Sigmoid colon (tissue), 7 donors: ENCODE measurements at regions of chr1 and their contacts with region 1.

Region 1: GRCh38 chr1:176843352-176844297 is 320.9 kb downstream of the ASTN1 start:
- DNase-seq: no peak
- H3K4me3 ChIP-seq: no peak overlapping the region
- H3K27ac ChIP-seq: peak overlapping the region in 1 of 4 donors; percentile 74
- H3K4me1 ChIP-seq: peaks cover 0 to 49% (median 36%) of the 10 kb centered on the region in 4 donors
- H3K27me3 ChIP-seq: no peaks in the 10 kb centered on the region
- CTCF ChIP-seq: peak; percentile 28 to 63 (median 50)
- EP300 ChIP-seq: no peak
- POLR2A ChIP-seq: no peak

Region 2: GRCh38 chr1:176374967-176375569 is 468.6 kb before region 1 on chr1:
- intact Hi-C with region 1: loop called (anchors 5 kb)
- DNase-seq: peak; percentile 80
- H3K4me3 ChIP-seq: no peak overlapping the region
- H3K27ac ChIP-seq: no peak overlapping the region
- H3K4me1 ChIP-seq: no peaks in the 10 kb centered on the region
- H3K27me3 ChIP-seq: no peaks in the 10 kb centered on the region
- CTCF ChIP-seq: peak; percentile 34 to 83 (median 73)
- EP300 ChIP-seq: no peak
- POLR2A ChIP-seq: no peak

Region 3: GRCh38 chr1:176691251-176692228 is 152.1 kb before region 1 on chr1:
- intact Hi-C with region 1: loop called (anchors 5 kb)
- DNase-seq: peak; percentile 69
- H3K4me3 ChIP-seq: no peak overlapping the region
- H3K27ac ChIP-seq: peak overlapping the region in 3 of 4 donors; percentile 73 to 87 (median 77)
- H3K4me1 ChIP-seq: peaks cover 0 to 58% (median 54%) of the 10 kb centered on the region in 4 donors
- H3K27me3 ChIP-seq: no peaks in the 10 kb centered on the region
- CTCF ChIP-seq: peak; percentile 31 to 68 (median 54)
- EP300 ChIP-seq: no peak
- POLR2A ChIP-seq: no peak

Region 4: DNA sequence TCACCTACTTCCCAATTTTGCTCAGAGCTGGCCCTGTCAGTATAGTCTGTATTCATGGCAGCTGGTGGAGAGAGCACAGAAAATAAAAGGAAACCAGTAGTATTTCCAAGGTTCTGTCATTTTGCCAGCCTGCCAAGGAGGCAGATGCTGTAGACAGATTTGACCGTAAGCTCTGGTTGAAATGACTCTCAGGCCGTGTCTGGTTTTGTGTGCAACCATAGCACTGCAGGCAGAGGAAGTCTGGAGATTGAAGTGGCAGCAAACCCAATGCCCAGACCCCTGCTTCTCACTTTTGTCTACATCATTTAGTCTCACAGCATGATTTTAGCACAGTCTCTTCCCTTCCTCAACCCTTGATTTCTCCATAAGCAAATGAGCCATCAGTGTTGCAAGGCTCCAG is 88.9 kb before region 1 on chr1:
- intact Hi-C with region 1: no loop called
- DNase-seq: no peak
- H3K4me3 ChIP-seq: no peak overlapping the region
- H3K27ac ChIP-seq: no peak overlapping the region
- H3K4me1 ChIP-seq: no peaks in the 10 kb centered on the region
- H3K27me3 ChIP-seq: no peaks in the 10 kb centered on the region
- CTCF ChIP-seq: no peak
- EP300 ChIP-seq: no peak
- POLR2A ChIP-seq: no peak

Region 5: GRCh38 chr1:176765608-176766007 is 78.0 kb before region 1 on chr1:
- intact Hi-C with region 1: no loop called
- DNase-seq: no peak
- H3K4me3 ChIP-seq: no peak overlapping the region
- H3K27ac ChIP-seq: no peak overlapping the region
- H3K4me1 ChIP-seq: peaks cover 0 to 5% (median 2%) of the 10 kb centered on the region in 4 donors
- H3K27me3 ChIP-seq: no peaks in the 10 kb centered on the region
- CTCF ChIP-seq: no peak
- EP300 ChIP-seq: no peak
- POLR2A ChIP-seq: no peak

Region 6: DNA sequence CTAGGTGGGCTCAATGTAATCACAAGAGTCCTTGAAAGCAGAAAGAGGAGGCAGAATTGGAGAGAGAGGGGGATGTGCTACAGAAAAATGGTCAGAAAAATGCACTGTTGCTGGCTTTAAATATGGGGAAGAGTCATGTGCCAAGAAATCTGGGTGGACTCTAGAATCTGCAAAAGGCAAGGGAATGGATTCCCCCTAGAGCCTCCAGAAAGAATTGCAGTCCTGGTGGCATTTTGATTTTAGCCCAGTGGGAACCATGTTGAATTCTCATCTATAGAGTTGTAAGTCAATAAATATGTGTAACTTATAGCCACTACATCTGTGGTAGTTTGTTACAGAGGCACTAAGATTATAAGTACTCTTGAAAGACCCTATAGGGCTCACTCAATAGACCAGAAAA is 110.6 kb after region 1 on chr1:
- intact Hi-C with region 1: no loop called
- DNase-seq: no peak
- H3K4me3 ChIP-seq: no peak overlapping the region
- H3K27ac ChIP-seq: no peak overlapping the region
- H3K4me1 ChIP-seq: no peaks in the 10 kb centered on the region
- H3K27me3 ChIP-seq: no peaks in the 10 kb centered on the region
- CTCF ChIP-seq: no peak
- EP300 ChIP-seq: no peak
- POLR2A ChIP-seq: no peak

Region 7: DNA sequence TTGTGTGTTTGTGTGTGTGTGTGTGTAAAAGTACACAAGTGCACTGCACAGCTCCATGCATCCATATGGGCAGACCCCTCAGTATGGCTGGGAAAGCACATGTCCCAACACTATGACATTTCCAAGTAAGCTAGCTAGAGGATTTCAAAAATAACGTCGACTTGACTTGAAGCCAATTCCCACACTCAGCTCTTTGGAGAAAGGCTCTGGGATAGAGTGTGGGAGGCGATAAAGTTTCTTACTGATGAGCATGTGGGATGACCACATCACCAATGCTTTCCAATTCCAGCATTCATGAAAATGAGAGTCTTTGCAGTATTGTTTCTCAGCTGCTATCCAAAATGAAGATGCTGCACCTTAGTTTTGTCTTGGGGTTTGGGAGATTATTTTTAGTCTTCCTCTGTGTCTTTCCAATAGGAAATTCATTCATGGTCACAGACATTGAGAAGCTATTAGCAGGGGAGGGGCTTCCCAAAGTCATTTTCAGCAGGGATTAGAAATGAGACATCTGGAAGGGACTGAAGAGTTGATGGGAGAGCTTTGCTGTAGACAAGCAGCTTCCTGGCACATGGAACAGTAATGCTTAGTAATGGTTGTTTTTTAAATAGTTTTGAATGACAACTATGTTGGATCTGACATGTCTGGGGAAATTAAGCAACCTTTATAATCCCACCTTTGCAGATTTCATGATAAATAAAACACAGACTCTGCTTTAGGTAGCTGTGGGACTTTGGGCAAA is 177.4 kb after region 1 on chr1:
- intact Hi-C with region 1: no loop called
- DNase-seq: no peak
- H3K4me3 ChIP-seq: no peak overlapping the region
- H3K27ac ChIP-seq: no peak overlapping the region
- H3K4me1 ChIP-seq: no peaks in the 10 kb centered on the region
- H3K27me3 ChIP-seq: no peaks in the 10 kb centered on the region
- CTCF ChIP-seq: no peak
- EP300 ChIP-seq: no peak
- POLR2A ChIP-seq: no peak